H1 (cell line): ENCODE measurements at regions of chr10 and their contacts with region 1.

Region 1: DNA sequence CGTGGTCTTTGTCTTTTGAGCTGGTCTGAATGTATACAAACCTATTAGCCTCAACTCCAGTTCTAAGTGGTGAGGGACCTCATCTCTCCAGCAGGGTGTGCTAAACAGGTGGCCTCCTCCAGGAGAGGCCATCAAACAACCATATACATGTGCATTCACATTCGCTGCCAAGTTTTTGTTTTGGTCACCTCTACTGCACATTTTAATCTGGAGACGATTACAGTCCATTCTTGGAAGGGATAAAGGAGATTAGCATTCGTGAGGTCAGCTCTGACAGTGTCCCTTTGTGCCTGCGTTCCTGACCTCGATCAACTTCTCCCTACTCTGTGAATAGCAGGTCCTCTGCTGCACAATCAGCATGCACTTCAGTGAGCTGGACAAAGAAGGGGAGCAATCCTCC is 60.8 kb downstream of the RHOBTB1 start:
- DNase-seq: no peak
- H3K4me3 ChIP-seq: no peak overlapping the region
- H3K27ac ChIP-seq: no peak overlapping the region
- H3K4me1 ChIP-seq: peaks cover 2 to 9% (median 3%) of the 10 kb centered on the region in 4 experiments; a peak in 4 of 7 replicates
- H3K27me3 ChIP-seq: no peaks in the 10 kb centered on the region
- CTCF ChIP-seq: peak; percentile 34 to 54 (median 37)
- EP300 ChIP-seq: no peak
- POLR2A ChIP-seq: no peak
- RAD21 ChIP-seq: peak; percentile 4 to 43; a peak in 2 of 4 replicates

Region 2: DNA sequence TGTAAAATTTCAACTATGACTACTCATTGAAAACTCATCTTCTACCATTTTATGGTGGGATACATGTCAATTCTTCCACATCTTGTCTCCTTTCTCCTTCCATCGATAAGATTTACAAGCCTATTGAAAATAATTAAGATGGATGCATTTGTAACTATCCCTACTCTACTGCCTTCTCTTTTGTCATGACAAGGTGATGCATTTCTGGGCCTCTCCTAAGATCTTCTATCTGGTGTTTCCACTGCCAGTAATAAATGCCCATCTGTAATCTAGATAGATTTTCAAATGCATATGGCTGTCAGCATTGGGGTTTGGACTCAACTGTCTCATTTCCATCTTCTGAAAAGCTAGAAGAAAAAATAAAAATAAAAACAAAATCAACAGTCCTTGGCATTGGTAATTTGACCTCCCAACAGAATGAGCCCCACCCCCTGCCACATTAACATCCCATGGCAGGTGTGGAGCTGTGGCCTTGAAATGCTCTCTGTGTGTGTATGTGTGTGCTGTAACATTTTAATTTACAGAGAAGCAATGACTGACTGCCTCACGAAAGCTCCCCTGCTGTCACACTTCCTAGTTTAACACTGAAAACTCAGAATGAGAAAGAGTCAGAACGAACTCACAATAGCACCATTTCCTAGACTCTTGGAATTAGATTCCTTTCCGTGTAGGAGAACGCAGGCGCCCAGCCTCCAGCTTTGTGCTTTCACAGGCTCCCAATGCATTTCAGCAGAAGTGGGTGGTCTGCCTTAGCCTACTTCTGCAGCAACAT is 13.3 kb before region 1 on chr10:
- CTCF ChIA-PET with region 1: interaction called, 13 read pairs
- POLR2A ChIA-PET with region 1: no interaction called
- DNase-seq: no peak
- H3K4me3 ChIP-seq: no peak overlapping the region
- H3K27ac ChIP-seq: no peak overlapping the region
- H3K4me1 ChIP-seq: peaks cover 0 to 11% (median 6%) of the 10 kb centered on the region in 4 experiments; a peak in 3 of 7 replicates
- H3K27me3 ChIP-seq: no peaks in the 10 kb centered on the region
- CTCF ChIP-seq: no peak
- EP300 ChIP-seq: no peak
- POLR2A ChIP-seq: no peak
- RAD21 ChIP-seq: no peak

Region 3: DNA sequence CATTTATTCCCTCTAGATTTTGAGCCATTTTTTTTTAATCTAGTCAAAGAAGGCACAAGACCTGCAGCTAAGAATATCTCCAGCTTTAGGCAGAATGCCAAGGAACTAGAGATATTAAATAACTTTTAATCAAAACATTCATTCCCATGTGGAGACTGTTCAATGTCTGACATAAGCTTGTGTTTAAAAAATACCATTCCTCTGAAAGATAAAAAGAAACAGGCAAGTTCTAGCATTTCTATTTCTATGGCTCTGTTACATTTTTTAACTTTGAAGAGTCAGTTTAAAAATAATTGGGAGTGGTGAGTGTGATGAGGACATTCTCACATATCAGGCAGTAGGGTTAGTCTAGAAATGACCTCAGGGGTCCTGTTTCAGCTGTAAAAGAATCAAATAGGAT is 12.8 kb after region 1 on chr10:
- CTCF ChIA-PET with region 1: interaction called, 17 read pairs
- POLR2A ChIA-PET with region 1: no interaction called
- DNase-seq: no peak
- H3K4me3 ChIP-seq: no peak overlapping the region
- H3K27ac ChIP-seq: no peak overlapping the region
- H3K4me1 ChIP-seq: no peaks in the 10 kb centered on the region
- H3K27me3 ChIP-seq: peaks cover 0 to 1% (median 0%) of the 10 kb centered on the region in 4 experiments; a peak in 1 of 7 replicates
- CTCF ChIP-seq: no peak
- EP300 ChIP-seq: no peak
- POLR2A ChIP-seq: no peak
- RAD21 ChIP-seq: no peak